ENCODE measurements at regions of chr13 and their contacts with region 1.

Region 1: GRCh38 chr13:43074824-43075510 is 51.6 kb downstream of the DNAJC15 start:
- DNase-seq: peak; percentile 46
- H3K4me3 Mint-ChIP-seq: no peak overlapping the region
- H3K27ac Mint-ChIP-seq: no peak overlapping the region
- H3K4me1 Mint-ChIP-seq: peaks cover 54% of the 10 kb centered on the region
- H3K27me3 Mint-ChIP-seq: no peaks in the 10 kb centered on the region

Region 2: DNA sequence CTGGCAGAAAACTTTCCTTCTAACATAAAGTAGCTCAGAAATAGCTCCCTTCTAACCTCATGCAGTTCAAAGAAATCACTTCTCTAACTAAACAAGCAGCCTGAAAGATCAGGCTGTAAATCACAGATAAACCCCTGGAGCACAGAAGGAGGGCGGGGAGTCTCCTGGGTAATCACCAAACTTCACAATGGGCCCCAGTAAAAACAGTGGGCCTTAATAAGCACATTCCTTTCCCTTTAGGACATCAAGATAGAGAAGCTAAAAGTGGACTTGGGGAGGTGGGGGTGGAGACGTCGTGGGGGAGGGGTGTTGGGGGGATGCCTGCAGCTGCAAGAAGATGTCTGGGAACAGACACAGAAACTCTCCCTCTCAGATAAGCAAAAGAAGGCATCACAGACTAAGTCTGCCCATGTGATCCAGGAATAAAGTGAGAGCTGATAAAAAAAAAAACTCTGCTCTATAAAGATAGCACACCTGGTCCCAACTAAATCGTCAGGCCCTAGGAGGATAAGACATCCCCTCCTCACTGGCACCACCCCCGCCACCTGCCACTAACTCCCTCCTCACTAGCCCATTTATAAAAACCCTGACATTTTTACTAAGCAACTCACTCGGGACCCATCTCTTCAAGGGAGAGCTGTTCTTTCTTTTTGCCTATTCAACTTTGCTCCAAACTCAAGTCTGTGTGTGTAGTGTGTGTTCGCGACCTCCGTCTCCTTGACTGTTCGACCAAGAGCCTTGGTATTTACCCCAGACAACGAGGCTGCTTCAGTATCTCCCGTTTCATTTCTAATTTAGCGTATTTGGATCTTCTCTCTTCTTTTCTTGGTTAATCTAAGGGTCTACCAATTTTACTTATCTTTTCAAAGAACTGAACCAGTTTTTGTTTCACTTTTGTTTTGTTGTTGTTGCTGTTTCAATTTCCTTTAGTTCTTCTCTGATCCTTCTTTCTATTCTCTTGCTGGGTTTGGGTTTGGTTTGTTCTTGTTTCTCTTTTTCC is 19.9 kb before region 1 on chr13:
- CTCF ChIA-PET with region 1: no interaction called
- POLR2A ChIA-PET with region 1: interaction called, 3 read pairs
- intact Hi-C with region 1: loop called (anchors 2 kb)
- DNase-seq: peak; percentile 25
- H3K4me3 Mint-ChIP-seq: no peak overlapping the region
- H3K27ac Mint-ChIP-seq: no peak overlapping the region
- H3K4me1 Mint-ChIP-seq: peaks cover 29% of the 10 kb centered on the region
- H3K27me3 Mint-ChIP-seq: no peaks in the 10 kb centered on the region

Region 3: GRCh38 chr13:43094901-43095300 is 19.9 kb after region 1 on chr13:
- CTCF ChIA-PET with region 1: no interaction called
- POLR2A ChIA-PET with region 1: interaction called, 3 read pairs
- intact Hi-C with region 1: loop called (anchors 1 kb)
- DNase-seq: no peak
- H3K4me3 Mint-ChIP-seq: no peak overlapping the region
- H3K27ac Mint-ChIP-seq: peak overlapping the region; percentile 40
- H3K4me1 Mint-ChIP-seq: peaks cover 22% of the 10 kb centered on the region
- H3K27me3 Mint-ChIP-seq: no peaks in the 10 kb centered on the region

Region 4: GRCh38 chr13:43767341-43767931 is 692.5 kb after region 1 on chr13:
- CTCF ChIA-PET with region 1: no interaction called
- POLR2A ChIA-PET with region 1: no interaction called
- intact Hi-C with region 1: no loop called
- DNase-seq: no peak
- H3K4me3 Mint-ChIP-seq: no peak overlapping the region
- H3K27ac Mint-ChIP-seq: no peak overlapping the region
- H3K4me1 Mint-ChIP-seq: no peaks in the 10 kb centered on the region
- H3K27me3 Mint-ChIP-seq: peaks cover 6% of the 10 kb centered on the region